T-cell (primary cell): ENCODE measurements at regions of chr6 and their contacts with region 1.

Region 1: GRCh38 chr6:36302227-36302976 is 32.5 kb downstream of the PNPLA1 start:
- DNase-seq: peak; percentile 75 to 97 (median 89)
- ATAC-seq: peak; percentile 97 to 99 (median 98)
- H3K4me3 ChIP-seq: no peak overlapping the region
- H3K4me3 Mint-ChIP-seq: no peak overlapping the region
- H3K27ac ChIP-seq: no peak overlapping the region
- H3K27ac Mint-ChIP-seq: no peak overlapping the region
- H3K4me1 ChIP-seq: peaks cover 0 to 8% of the 10 kb centered on the region in 2 experiments
- H3K4me1 Mint-ChIP-seq: peaks cover 2 to 4% (median 4%) of the 10 kb centered on the region in 3 donors
- H3K27me3 ChIP-seq: peaks cover 0 to 15% of the 10 kb centered on the region in 2 experiments
- H3K27me3 Mint-ChIP-seq: peaks cover 9 to 20% of the 10 kb centered on the region in 2 donors

Region 2: GRCh38 chr6:35970181-35970580 is 332.2 kb before region 1 on chr6:
- CTCF ChIA-PET with region 1: no interaction called
- POLR2A ChIA-PET with region 1: no interaction called
- DNase-seq: no peak
- ATAC-seq: no peak
- H3K4me3 ChIP-seq: no peak overlapping the region
- H3K4me3 Mint-ChIP-seq: no peak overlapping the region
- H3K27ac ChIP-seq: no peak overlapping the region
- H3K27ac Mint-ChIP-seq: no peak overlapping the region
- H3K4me1 ChIP-seq: no peaks in the 10 kb centered on the region
- H3K4me1 Mint-ChIP-seq: no peaks in the 10 kb centered on the region
- H3K27me3 ChIP-seq: peaks cover 0 to 1% of the 10 kb centered on the region in 2 experiments
- H3K27me3 Mint-ChIP-seq: peaks cover 3 to 7% of the 10 kb centered on the region in 2 donors

Region 3: GRCh38 chr6:36333931-36334725 is 31.7 kb after region 1 on chr6:
- CTCF ChIA-PET with region 1: no interaction called
- POLR2A ChIA-PET with region 1: no interaction called
- DNase-seq: no peak
- ATAC-seq: no peak
- H3K4me3 ChIP-seq: no peak overlapping the region
- H3K4me3 Mint-ChIP-seq: no peak overlapping the region
- H3K27ac ChIP-seq: no peak overlapping the region
- H3K27ac Mint-ChIP-seq: no peak overlapping the region
- H3K4me1 ChIP-seq: peaks cover 3 to 11% of the 10 kb centered on the region in 2 experiments
- H3K4me1 Mint-ChIP-seq: peaks cover 8 to 21% (median 12%) of the 10 kb centered on the region in 3 donors
- H3K27me3 ChIP-seq: peaks cover 6 to 38% of the 10 kb centered on the region in 2 experiments
- H3K27me3 Mint-ChIP-seq: peaks cover 26 to 36% of the 10 kb centered on the region in 2 donors

Region 4: DNA sequence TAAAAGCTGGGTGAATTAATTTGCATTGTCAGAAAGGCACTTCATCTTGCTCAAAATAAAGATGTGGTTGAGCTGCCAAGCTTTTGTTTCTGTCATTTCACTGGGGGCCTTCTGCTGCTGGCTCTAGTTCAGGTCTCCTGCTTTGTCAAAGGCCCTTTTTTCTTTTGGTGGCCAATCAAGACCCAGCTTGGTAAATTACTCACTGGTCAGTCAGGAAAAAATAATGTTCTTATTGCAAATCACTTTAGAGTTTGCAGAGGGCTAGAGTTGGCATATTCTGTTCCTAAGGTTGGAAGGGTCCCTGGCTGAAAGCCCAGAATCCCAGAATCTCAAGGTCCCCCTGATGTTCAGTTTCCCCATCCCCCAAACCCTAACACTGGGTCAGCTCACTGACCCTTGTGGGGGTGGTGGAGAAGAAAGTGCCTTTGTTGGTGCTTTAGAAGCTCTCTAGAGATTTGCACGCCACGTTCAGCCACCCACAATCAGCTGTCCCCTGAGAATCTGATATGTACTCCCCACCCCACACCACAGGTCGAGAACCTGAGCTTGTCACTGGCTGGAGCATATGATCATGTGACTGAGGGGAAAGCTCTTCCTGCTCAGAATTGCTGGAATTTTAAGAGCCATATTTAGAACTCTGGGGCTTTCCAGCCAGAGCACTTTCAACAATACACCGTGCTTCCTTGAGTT is 56.0 kb after region 1 on chr6:
- CTCF ChIA-PET with region 1: interaction called, 3 to 11 read pairs
- POLR2A ChIA-PET with region 1: interaction called in 1 of 2 experiments, 3 read pairs
- DNase-seq: no peak
- ATAC-seq: no peak
- H3K4me3 ChIP-seq: no peak overlapping the region
- H3K4me3 Mint-ChIP-seq: no peak overlapping the region
- H3K27ac ChIP-seq: no peak overlapping the region
- H3K27ac Mint-ChIP-seq: no peak overlapping the region
- H3K4me1 ChIP-seq: peaks cover 0 to 9% of the 10 kb centered on the region in 2 experiments
- H3K4me1 Mint-ChIP-seq: peaks cover 3 to 22% (median 5%) of the 10 kb centered on the region in 3 donors
- H3K27me3 ChIP-seq: no peaks in the 10 kb centered on the region
- H3K27me3 Mint-ChIP-seq: peaks cover 0 to 3% of the 10 kb centered on the region in 2 donors

Region 5: GRCh38 chr6:37585523-37585905 is 1283.1 kb after region 1 on chr6:
- CTCF ChIA-PET with region 1: interaction called in 1 of 2 experiments, 10 read pairs
- POLR2A ChIA-PET with region 1: no interaction called
- DNase-seq: no peak
- ATAC-seq: no peak
- H3K4me3 ChIP-seq: no peak overlapping the region
- H3K4me3 Mint-ChIP-seq: no peak overlapping the region
- H3K27ac ChIP-seq: no peak overlapping the region
- H3K27ac Mint-ChIP-seq: no peak overlapping the region
- H3K4me1 ChIP-seq: no peaks in the 10 kb centered on the region
- H3K4me1 Mint-ChIP-seq: no peaks in the 10 kb centered on the region
- H3K27me3 ChIP-seq: peaks cover 0 to 20% of the 10 kb centered on the region in 2 experiments
- H3K27me3 Mint-ChIP-seq: no peaks in the 10 kb centered on the region